ENCODE measurements at regions of chr1 and their contacts with region 1.

Region 1: DNA sequence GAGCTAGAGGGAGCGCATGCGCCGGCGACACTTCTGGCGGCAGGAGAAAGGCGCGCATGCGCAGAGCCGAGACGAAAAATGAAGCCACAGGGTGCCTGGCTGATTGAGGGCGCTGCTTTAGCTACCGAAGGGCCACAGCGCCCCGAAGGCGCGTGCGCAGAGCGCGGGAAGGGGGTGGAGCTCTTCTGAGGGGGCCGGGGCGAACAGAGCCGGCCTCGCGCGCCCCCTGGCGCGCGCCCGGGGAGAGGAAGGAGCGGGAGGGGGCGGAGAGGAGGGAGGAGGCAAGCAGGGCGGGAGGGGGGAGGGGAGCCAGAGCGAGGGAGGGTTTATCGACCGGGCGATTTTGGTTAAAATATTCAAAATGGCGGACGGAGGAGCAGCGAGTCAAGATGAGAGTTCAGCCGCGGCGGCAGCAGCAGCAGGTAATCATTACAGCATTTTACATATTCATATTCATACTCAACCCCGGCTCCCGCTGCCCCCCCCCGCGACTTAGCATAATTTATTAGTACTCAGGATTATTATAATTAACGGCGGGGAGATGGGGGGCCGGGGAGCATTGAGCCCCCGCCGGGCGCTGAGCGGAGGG is at the start of gene POU2F1:
- DNase-seq: peak; percentile 98
- ATAC-seq: peak; percentile 73
- H3K4me3 Mint-ChIP-seq: peak within 1 kb of the TSS; percentile 93
- H3K27ac Mint-ChIP-seq: peak within 1 kb of the TSS; percentile 100
- H3K4me1 Mint-ChIP-seq: peaks cover 50% of the 10 kb centered on the region
- H3K27me3 Mint-ChIP-seq: peaks cover 6% of the 10 kb centered on the region; the same call in 1 of the 2 replicates
- CTCF ChIP-seq: peak; percentile 31; the same call in 1 of the 2 replicates
- total RNA-seq, gene POU2F1: 51.0 to 55.0 TPM (median 51.3 TPM) in 3 replicates

Region 2: DNA sequence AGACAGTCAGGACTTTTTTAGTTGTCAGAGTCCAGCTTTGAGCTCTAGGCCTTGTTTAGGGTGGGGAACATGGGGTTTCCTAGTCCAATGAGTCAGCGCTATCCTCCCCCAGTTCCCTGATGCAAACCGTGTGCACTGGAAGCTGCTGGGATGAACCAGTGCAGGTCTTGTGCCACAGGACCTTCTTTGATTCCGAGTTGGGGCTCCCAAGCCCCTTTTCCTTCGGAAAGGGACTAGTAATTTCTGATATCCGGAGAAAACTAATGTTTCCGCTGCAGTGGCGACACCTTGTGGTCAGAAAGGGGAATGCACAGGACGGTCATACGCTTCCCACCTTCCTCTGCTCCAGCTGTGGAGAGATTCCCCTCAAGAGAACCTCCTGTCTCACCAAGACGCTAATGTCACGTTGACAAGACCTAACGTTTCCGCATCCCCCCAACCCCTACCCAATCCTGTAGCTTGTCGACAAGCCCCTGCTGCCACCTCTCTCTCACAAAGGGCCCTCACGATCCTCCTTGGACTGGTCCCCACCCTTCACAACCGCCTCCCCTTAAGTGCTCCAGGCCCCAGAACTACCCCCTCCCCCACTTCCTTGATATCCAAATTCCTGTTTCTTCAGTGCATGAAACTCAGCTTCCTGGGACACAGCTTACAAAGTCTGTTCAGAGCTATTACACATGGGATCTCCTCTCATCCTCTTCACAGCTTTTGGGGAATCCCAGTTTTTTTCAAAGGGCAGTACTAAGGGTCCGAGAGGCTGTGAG is 161.4 kb before region 1 on chr1:
- CTCF ChIA-PET with region 1: interaction called, 69 read pairs
- POLR2A ChIA-PET with region 1: interaction called, 4 read pairs
- DNase-seq: peak; percentile 88
- ATAC-seq: peak; percentile 73
- H3K4me3 Mint-ChIP-seq: peak overlapping the region; percentile 55
- H3K27ac Mint-ChIP-seq: no peak overlapping the region
- H3K4me1 Mint-ChIP-seq: peaks cover 17% of the 10 kb centered on the region
- H3K27me3 Mint-ChIP-seq: no peaks in the 10 kb centered on the region
- CTCF ChIP-seq: peak; percentile 98

Region 3: GRCh38 chr1:167121375-167122120 is 99.1 kb before region 1 on chr1:
- CTCF ChIA-PET with region 1: interaction called, 16 read pairs
- POLR2A ChIA-PET with region 1: interaction called, 7 read pairs
- DNase-seq: peak; percentile 58
- ATAC-seq: peak; percentile 80
- H3K4me3 Mint-ChIP-seq: peak overlapping the region; percentile 83
- H3K27ac Mint-ChIP-seq: peak overlapping the region; percentile 51
- H3K4me1 Mint-ChIP-seq: peaks cover 50% of the 10 kb centered on the region
- H3K27me3 Mint-ChIP-seq: peaks cover 13% of the 10 kb centered on the region
- CTCF ChIP-seq: no peak

Region 4: GRCh38 chr1:167165948-167166689 is 54.5 kb before region 1 on chr1:
- CTCF ChIA-PET with region 1: interaction called, 21 read pairs
- POLR2A ChIA-PET with region 1: interaction called, 22 read pairs
- DNase-seq: peak; percentile 76
- ATAC-seq: peak; percentile 91
- H3K4me3 Mint-ChIP-seq: peak overlapping the region; percentile 42
- H3K27ac Mint-ChIP-seq: peak overlapping the region; percentile 93
- H3K4me1 Mint-ChIP-seq: peaks cover 61% of the 10 kb centered on the region
- H3K27me3 Mint-ChIP-seq: no peaks in the 10 kb centered on the region
- CTCF ChIP-seq: no peak

Region 5: GRCh38 chr1:167207940-167208623 is 12.5 kb before region 1 on chr1:
- CTCF ChIA-PET with region 1: interaction called, 23 read pairs
- POLR2A ChIA-PET with region 1: interaction called, 16 read pairs
- DNase-seq: no peak
- ATAC-seq: peak; percentile 33; the same call in 1 of the 2 replicates
- H3K4me3 Mint-ChIP-seq: no peak overlapping the region
- H3K27ac Mint-ChIP-seq: no peak overlapping the region
- H3K4me1 Mint-ChIP-seq: peaks cover 18% of the 10 kb centered on the region
- H3K27me3 Mint-ChIP-seq: no peaks in the 10 kb centered on the region
- CTCF ChIP-seq: no peak

Region 6: DNA sequence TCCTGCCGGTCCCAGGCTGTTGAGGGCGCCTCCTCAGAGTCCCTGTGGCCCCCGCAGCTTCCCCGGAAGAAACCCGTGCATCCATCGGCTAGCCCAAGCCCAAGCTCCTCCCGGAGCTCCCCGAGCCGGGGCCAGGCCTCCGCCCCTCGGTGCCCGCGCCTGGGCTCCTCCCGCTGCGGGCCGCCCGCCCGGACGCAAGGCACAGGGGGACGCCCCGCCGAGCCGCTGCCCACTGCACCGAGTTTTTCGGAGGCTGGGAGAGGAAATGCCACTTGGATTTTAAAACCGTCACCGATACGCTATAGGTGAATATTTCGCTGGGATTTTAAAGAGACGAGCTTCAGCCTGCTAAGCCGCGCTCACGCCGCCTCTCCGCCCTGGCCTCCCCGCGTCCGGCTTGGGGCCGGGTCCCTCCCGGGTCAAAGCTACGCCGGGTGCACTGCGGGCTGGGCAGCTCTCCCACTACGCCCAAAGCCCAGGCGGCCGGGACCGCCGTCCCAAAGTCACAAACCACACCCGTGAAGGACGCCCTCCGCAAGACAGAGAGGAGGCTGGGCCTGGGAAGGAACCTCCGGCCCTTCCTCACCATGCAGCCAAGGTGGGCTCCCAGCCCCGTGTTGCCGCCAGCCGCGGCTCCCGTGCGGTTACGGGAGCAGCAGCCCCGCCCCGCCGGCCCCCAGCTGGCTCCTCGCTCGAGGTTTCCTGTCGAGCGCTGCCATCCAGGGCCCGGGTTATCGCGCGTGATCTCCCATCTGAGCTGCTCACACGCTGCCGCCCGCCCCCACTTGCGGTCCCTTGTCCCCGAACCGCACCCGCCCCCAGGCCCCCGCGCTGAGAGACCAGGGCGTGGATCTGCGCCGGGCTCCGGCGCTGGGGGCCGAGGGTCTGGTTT is 234.5 kb after region 1 on chr1:
- CTCF ChIA-PET with region 1: interaction called, 12 read pairs
- POLR2A ChIA-PET with region 1: interaction called, 3 read pairs
- DNase-seq: peak; percentile 57
- ATAC-seq: peak; percentile 54
- H3K4me3 Mint-ChIP-seq: peak overlapping the region; percentile 64
- H3K27ac Mint-ChIP-seq: no peak overlapping the region
- H3K4me1 Mint-ChIP-seq: peaks cover 24% of the 10 kb centered on the region
- H3K27me3 Mint-ChIP-seq: peaks cover 46% of the 10 kb centered on the region
- CTCF ChIP-seq: no peak